PC-9 (cell line): ENCODE measurements at regions of chr5 and their contacts with region 1.

Region 1: DNA sequence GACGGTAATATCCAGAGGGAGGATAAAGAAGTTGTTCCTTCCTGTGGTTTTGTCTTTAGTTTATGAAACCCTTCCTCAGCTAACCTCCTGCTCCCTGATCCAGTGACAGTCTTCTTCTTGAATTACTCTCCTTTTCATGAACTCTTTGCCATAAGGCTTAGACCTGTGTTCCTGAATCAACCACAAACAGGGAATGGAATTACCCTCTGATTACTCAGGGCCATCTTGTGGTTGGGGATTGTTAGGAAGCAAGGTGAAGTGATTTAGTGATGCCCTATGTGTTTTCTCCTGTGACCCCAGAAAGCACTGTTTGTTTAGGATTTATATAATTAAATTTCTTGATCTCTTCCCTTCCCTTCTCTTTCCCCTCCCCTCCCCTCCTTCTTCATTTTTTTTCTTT is 409.1 kb downstream of the TAF11L14 start:
- DNase-seq: no peak
- H3K4me3 ChIP-seq: no peak overlapping the region
- H3K27ac ChIP-seq: no peak overlapping the region
- H3K4me1 ChIP-seq: no peaks in the 10 kb centered on the region
- H3K27me3 ChIP-seq: no peaks in the 10 kb centered on the region
- CTCF ChIP-seq: no peak

Region 2: DNA sequence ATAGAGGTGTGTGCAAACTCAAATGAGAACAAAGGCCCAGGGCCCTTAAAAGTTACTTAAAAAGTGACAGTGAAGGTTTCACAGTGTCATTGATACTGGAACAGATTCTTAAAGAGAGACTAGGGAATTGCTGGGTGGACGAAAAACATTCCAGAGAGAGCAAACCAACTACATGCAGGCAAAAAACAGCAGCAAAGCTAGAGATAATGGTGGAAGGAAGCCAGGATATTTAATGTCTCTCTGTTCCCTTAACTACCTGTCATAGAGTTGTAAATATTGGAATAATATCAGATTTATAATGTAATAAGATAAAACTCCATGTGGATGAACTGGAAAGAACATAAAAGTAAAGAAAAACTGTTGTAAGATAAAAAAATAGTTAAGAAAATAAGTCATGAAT is 99.5 kb after region 1 on chr5:
- CTCF ChIA-PET with region 1: no interaction called
- POLR2A ChIA-PET with region 1: no interaction called
- intact Hi-C with region 1: no loop called
- DNase-seq: no peak
- H3K4me3 ChIP-seq: no peak overlapping the region
- H3K27ac ChIP-seq: no peak overlapping the region
- H3K4me1 ChIP-seq: no peaks in the 10 kb centered on the region
- H3K27me3 ChIP-seq: no peaks in the 10 kb centered on the region
- CTCF ChIP-seq: no peak

Region 3: GRCh38 chr5:18179579-18179978 is 136.2 kb after region 1 on chr5:
- CTCF ChIA-PET with region 1: no interaction called
- POLR2A ChIA-PET with region 1: interaction called, 10 read pairs
- intact Hi-C with region 1: no loop called
- DNase-seq: no peak
- H3K4me3 ChIP-seq: no peak overlapping the region
- H3K27ac ChIP-seq: no peak overlapping the region
- H3K4me1 ChIP-seq: no peaks in the 10 kb centered on the region
- H3K27me3 ChIP-seq: no peaks in the 10 kb centered on the region
- CTCF ChIP-seq: no peak